GM13977 (cell line): ENCODE measurements at regions of chr10 and their contacts with region 1.

Region 1: GRCh38 chr10:33008499-33009243 is 50.6 kb upstream of the ITGB1 start:
- DNase-seq: peak; percentile 70
- CTCF ChIP-seq: peak; percentile 89

Region 2: DNA sequence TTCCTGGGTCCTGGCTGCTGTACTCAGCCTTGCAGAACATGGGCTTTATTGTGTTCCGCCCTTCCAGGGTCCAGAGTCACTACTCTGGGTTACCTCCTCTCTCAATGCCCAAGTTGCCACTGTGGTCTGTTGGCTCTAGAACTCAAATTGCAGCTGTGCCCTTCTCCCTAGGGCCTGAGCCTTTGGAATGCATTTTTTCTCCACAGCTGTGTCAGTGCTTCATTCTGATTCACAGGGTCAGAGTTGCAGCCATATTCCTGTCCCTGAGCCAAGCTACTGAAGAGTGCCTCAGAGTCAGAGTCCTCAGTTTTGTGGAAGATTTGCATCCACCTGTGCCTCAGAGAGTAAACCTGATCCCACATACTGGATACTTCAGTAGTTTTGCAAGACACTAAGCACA is 218.2 kb before region 1 on chr10:
- in situ Hi-C with region 1: loop called (anchors 5 kb)
- DNase-seq: no peak
- CTCF ChIP-seq: no peak

Region 3: GRCh38 chr10:33216661-33217427 is 208.2 kb after region 1 on chr10:
- in situ Hi-C with region 1: no loop called
- DNase-seq: no peak
- CTCF ChIP-seq: no peak